A673 (cell line): ENCODE measurements at regions of chr18 and their contacts with region 1.

Region 1: DNA sequence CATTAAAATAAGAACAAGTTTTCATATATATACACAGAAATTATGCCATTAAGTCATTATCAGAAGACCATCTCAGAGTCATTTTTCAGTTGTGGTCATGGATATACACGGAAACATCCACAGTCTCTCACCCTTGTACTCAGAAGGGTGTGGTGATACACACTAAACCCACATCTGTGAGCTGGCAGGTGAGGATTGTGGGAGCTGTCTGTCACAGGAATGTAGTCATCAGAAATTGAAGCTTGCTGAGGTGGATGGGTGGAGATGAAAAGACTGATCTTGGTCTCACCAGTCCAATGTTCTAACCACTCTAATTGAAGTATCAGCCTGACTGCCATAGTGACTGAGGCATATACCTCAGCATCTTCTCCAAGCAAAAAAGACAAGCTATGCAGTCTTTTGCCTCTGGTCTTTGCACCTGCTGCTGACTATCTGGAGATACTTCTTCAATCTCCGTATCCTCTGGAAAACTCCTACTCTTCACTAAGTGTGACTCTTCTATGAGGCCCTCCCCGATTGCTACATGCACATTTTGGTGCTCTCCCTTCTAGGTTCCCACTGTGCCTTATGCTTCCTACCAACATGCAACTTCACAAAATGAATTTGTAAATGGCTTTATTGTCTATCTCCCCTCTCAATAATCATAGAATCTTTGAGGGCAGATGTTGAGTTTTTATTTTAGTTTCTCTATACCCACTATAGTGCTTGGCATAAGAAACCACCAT is 232.8 kb downstream of the DYM start:
- DNase-seq: peak; percentile 79
- H3K4me3 ChIP-seq: no peak overlapping the region
- H3K27ac ChIP-seq: peak overlapping the region; percentile 74
- H3K4me1 ChIP-seq: peaks cover 66% of the 10 kb centered on the region
- H3K27me3 ChIP-seq: no peaks in the 10 kb centered on the region
- CTCF ChIP-seq: no peak

Region 2: GRCh38 chr18:48951448-48952286 is 275.9 kb before region 1 on chr18:
- CTCF ChIA-PET with region 1: no interaction called
- POLR2A ChIA-PET with region 1: no interaction called
- intact Hi-C with region 1: loop called (anchors 5 kb)
- DNase-seq: peak; percentile 89
- H3K4me3 ChIP-seq: peak overlapping the region; percentile 73
- H3K27ac ChIP-seq: peak overlapping the region; percentile 67
- H3K4me1 ChIP-seq: peaks cover 14% of the 10 kb centered on the region
- H3K27me3 ChIP-seq: no peaks in the 10 kb centered on the region
- CTCF ChIP-seq: 0 out of 2 replicates have a peak, but pooled peaks have one; percentile 13

Region 3: GRCh38 chr18:49081511-49082155 is 146.0 kb before region 1 on chr18:
- CTCF ChIA-PET with region 1: no interaction called
- POLR2A ChIA-PET with region 1: no interaction called
- intact Hi-C with region 1: no loop called
- DNase-seq: no peak
- H3K4me3 ChIP-seq: no peak overlapping the region
- H3K27ac ChIP-seq: no peak overlapping the region
- H3K4me1 ChIP-seq: no peaks in the 10 kb centered on the region
- H3K27me3 ChIP-seq: no peaks in the 10 kb centered on the region
- CTCF ChIP-seq: no peak